Activated CD4-positive, alpha-beta T cell treated with anti-CD3 and anti-CD28 coated beads, Interleukin-2, amount 10 ng/mL, durations not matched to agents 24 days and 14 days (primary cell): ENCODE measurements at regions of chr13 and their contacts with region 1.

Region 1: GRCh38 chr13:100434010-100434763 is 154.4 kb downstream of the GGACT start:
- DNase-seq: peak; percentile 68
- H3K4me3 Mint-ChIP-seq: peak overlapping the region; percentile 22
- H3K27ac Mint-ChIP-seq: peak overlapping the region; percentile 26
- H3K4me1 Mint-ChIP-seq: peaks cover 31% of the 10 kb centered on the region
- H3K27me3 Mint-ChIP-seq: no peaks in the 10 kb centered on the region

Region 2: DNA sequence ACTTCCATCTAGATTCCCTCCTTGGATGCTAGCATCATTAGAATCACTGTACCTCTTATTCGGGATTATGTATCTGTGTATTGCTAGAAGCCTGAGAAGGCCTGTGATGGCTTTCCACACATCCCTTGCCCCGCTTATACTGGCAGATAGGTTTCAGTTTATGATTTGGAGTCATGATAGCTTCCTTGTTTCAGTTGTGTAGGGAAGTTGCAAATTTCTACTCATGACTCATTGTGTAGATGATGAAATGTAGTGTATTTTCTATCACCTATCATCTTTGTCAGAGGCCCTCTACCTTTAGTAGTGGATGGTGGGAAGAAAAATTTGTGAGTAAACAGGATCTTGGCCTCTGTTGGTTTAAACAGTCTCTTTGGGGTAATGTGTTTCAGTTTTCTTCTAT is 10.8 kb before region 1 on chr13:
- intact Hi-C with region 1: loop called (anchors 1 kb)
- DNase-seq: peak; percentile 51
- H3K4me3 Mint-ChIP-seq: no peak overlapping the region
- H3K27ac Mint-ChIP-seq: peak overlapping the region; percentile 30
- H3K4me1 Mint-ChIP-seq: peaks cover 9% of the 10 kb centered on the region
- H3K27me3 Mint-ChIP-seq: no peaks in the 10 kb centered on the region